Head of caudate nucleus (tissue), 42 donors: ENCODE measurements at regions of chr10 and their contacts with region 1.

Region 1: GRCh38 chr10:97731346-97732051 is 5.4 kb upstream of the ZFYVE27 start:
- DNase-seq: peak in 41 of 42 donors; percentile 26 to 92 (median 80)

Region 2: DNA sequence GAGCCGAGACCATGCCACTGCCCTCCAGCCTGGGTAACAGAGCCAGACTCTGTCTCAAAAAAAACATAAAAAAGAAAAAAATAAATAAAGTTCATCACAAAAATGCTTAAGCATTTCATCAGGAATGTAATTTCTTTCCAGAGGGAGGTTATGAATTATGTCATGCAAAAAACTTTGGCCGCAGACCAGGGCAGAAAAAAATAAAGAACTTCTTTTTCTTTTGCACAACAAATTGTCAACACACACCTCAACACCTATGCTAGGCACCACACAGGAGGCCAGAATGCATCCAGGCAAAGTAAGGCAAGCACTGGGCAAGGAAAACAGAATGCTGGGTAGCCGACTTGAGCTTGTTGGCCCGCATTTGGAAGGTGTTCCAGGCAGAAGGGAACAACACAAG is 138.1 kb before region 1 on chr10:
- intact Hi-C with region 1: no loop called
- DNase-seq: no peak

Region 3: DNA sequence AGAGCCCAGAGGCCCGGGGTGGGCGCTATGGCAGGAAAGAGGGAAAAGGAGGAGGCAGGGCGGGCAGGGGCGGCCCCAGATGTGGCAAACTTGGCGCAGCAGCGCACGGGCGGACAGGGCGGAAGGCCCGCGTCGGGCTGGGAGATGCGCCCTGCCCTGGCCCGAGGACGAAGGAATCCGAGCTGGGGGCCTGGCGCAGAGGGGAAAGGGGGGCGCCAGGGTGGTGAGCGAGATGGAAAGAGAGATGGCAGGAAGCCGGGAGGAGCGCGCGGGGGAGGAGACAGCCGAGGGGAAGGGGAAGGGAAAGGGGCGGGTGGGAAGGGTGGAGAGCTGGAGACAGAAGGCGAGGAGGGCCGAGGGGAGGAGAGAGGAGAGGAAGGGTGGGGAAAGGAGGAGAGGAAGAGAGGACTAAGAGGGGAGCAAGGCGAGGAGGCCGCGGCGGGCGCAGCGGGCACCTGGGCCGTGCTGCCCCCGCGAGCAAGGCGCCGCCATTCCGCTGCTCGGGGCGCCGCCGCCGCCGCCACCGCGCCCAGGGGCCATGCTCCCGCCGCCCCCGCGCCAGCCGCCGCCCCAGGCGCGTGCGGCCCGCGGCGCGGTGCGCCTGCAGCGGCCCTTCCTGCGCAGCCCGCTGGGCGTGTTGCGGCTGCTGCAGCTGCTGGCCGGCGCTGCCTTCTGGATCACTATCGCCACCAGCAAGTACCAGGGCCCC is 18.0 kb before region 1 on chr10 and contains the start of gene MARVELD1:
- intact Hi-C with region 1: loop called (anchors 2 kb)
- DNase-seq: peak in 34 of 42 donors; percentile 21 to 70 (median 44)